Stomach (tissue), 19 donors: ENCODE measurements at regions of chr10 and their contacts with region 1.

Region 1: DNA sequence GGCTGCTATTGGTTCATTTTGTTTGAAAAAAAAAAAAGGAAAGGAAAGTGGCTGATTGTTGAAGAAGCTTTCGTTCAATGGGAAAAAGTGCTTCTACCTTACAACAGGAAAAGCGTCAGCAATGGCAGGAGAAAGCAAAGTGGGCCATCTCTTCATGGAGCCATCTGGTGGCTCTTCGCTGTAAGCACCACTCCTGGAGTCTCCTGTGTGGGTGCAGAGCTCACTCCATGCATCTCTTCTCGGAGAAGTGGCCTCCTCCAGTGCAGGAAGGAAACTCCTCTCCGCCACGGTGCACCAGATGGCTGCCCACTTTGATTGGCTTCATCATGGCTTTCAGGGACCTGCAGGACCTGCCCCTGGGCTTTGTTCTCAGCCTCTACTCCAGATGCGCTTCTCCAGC is 250.9 kb downstream of the PTEN start:
- DNase-seq: peak; percentile 65 to 80
- H3K4me3 ChIP-seq: no peak overlapping the region
- H3K27ac ChIP-seq: peak overlapping the region in 1 of 5 donors; percentile 17
- H3K4me1 ChIP-seq: peaks cover 0 to 45% (median 9%) of the 10 kb centered on the region in 4 donors
- H3K27me3 ChIP-seq: no peaks in the 10 kb centered on the region
- CTCF ChIP-seq: peak in 5 of 7 experiments; percentile 46 to 78 (median 62)
- EP300 ChIP-seq: no peak
- POLR2A ChIP-seq: no peak

Region 2: DNA sequence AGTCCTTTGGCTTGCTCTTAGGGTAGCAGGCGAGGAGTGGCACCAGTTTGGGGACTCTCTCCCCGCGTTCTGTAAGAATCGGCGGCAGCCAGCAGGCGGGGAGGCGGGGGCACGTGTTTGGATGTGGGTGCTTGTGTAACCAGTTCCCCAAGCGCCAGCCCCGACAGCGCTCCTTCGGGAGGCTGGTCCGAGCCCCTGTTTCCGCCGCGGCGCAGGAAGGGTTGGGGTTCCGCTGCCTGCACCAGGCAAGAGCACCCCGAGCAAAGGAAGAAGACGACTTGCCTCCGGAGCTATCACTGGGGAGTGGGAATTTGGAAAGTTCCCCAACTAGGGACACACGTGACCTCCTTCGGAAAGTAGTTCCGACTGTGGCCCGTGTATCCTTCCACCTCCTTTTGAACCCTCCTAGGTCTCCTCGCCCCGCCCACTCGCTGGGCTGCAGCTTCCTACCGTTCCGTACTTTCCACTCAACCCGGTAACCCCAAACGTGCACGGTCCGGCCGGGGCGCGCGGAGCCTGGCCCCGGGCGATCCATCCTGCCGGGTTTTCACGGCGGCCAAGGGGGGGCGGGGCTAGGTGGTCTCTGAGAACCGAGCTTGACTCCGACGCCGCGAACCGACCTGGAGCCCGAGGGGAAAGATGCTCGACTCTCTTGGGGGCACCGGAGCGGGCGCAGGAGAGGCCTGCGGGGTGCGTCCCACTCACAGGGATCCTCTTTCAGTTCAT is 252.3 kb before region 1 on chr10:
- intact Hi-C with region 1: loop called (anchors 10 kb)
- DNase-seq: peak; percentile 98 to 99
- H3K4me3 ChIP-seq: peak overlapping the region; percentile 88 to 94 (median 90)
- H3K27ac ChIP-seq: peak overlapping the region; percentile 95 to 99 (median 97)
- H3K4me1 ChIP-seq: peaks cover 7 to 19% (median 16%) of the 10 kb centered on the region in 4 donors
- H3K27me3 ChIP-seq: no peaks in the 10 kb centered on the region
- CTCF ChIP-seq: no peak
- EP300 ChIP-seq: no peak
- POLR2A ChIP-seq: no peak